ENCODE measurements at regions of chr16 and their contacts with region 1.

Region 1: DNA sequence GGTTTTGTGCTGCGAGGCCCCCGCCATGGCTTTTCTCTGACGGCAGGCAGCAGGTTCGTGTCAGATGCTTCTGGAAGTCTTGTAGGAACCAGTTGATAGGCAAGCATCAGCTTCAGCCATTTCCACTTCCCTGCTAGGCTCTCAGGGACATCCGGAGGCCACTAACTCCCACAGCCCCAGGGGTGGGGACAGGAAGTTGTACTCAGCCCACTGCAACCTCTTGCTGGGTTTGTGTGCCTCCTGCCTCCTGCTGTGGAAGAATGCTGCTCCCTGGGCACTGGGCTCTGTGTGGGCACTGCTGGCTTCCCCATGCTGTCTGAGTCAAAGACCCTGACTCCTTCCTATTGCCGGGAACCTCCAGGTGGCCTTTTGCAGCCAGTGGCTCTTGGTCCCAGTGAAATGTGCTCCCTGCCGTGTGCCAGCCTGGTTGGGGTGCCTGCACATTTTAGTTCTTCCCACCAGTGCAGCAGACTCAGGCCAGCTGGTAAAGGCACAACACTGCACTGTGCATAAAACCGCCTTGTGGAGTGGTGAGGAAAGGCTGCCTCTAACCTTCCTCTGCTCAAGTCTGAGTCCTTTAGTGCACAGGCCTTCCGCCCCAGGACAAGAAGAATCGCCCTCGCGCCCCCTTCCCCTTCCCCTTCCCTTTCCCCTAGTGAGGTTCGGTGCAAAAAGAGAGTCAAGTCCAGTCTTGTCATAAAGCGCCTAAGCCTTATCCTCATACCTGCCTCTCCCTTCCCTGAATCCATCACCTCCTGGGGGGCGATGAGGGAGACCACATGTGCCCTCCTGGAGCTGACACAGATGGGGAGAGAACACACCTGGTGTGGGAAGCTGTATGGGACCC is 16.6 kb downstream of the LDHD start:
- DNase-seq: no peak
- H3K4me3 ChIP-seq: no peak overlapping the region
- H3K27ac ChIP-seq: no peak overlapping the region
- H3K4me1 ChIP-seq: peaks cover 9 to 45% (median 32%) of the 10 kb centered on the region in 4 experiments
- H3K27me3 ChIP-seq: no peaks in the 10 kb centered on the region
- CTCF ChIP-seq: no peak
- EP300 ChIP-seq: no peak
- POLR2A ChIP-seq: no peak
- RAD21 ChIP-seq: no peak

Region 2: DNA sequence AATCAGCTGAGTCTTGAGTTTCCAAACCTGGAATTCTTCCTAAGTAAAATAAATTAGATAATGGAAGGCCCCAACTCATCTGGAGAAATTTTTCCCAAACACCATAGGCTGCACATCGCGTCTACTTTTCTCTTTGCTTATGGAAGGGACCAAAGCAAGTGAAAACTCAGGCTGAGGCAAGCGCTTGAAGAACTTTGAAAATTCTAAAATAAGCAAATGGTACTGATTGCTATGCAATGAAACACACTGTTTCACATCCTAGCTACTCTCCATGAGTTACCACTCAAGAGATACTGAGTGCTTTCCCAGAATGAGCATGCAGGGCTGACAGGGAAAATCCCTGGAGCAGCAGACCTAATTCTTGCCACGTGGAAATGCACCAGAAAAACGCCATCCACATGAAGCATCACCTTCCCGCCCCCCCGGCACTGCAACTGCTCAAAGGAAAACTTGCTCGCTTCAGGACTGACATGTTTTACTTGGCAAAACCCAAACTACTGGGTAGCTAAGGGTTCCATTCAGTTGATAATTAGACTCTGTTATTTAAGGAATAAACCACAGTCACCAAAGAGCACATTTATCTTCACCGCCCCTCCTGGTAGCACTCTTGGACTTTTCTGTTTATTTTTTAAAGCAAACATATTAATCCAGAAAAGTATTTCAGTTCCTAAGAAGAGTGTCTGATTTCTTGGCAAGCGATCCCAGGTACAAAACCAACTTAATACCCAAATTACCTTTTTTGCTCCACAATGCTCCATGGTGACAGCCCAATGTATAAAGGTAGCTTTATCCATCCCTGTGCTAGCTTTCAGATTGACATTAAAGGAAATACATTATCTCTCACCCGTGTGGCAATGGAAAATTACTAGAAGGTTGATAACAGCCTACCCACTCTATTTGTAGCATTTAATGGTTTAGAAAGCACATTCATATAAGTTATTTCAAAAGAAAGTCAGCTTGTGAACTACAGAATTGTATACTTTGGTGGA is 177.5 kb before region 1 on chr16:
- CTCF ChIA-PET with region 1: no interaction called
- POLR2A ChIA-PET with region 1: no interaction called
- DNase-seq: no peak
- H3K4me3 ChIP-seq: no peak overlapping the region
- H3K27ac ChIP-seq: no peak overlapping the region
- H3K4me1 ChIP-seq: no peaks in the 10 kb centered on the region
- H3K27me3 ChIP-seq: no peaks in the 10 kb centered on the region
- CTCF ChIP-seq: no peak
- EP300 ChIP-seq: no peak
- POLR2A ChIP-seq: no peak
- RAD21 ChIP-seq: no peak

Region 3: DNA sequence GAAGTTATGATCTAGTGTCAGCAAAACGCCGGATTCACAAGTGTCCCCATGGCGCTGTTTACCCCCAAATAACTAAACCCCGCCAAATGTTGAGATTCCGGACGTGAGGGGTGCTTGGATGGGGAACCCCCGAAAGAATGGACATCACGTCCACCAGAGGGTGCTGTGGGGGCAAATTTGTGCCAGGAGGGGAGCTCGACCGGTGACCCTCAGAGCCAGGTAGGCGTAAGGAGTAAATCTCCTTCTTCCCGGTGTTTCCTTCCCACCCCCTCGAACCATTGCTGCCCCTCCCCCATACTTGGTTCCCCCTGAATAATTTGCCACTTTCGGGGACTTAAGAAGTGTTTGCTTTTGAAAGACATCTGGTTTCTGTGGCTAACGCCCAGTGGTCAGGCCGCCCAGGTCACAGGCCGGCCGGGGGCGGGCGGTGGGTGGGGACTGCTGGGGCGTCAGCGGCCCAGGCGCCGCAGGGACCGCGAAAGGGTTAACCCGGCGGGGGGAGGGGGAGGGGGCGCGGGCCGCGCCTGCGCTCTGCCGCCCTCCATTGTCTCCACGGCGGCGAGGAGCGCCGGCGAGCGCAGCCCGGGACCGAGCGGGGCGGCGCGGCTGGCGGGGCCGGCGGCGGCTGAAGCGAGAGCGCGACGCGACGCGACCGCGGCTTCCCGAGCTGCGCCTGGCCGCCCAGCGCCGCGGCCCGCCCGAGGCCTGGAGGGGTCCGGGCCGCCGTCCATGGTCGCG is 101.3 kb before region 1 on chr16 and contains the start of gene ZNRF1:
- CTCF ChIA-PET with region 1: interaction called, 24 read pairs
- POLR2A ChIA-PET with region 1: interaction called, 4 read pairs
- DNase-seq: peak; percentile 60 to 94
- H3K4me3 ChIP-seq: peak within 1 kb of the TSS; percentile 56 to 90 (median 70)
- H3K27ac ChIP-seq: peak within 1 kb of the TSS; percentile 67; the same call in 1 of the 2 replicates
- H3K4me1 ChIP-seq: peaks cover 2 to 15% (median 12%) of the 10 kb centered on the region in 4 experiments; a peak in 6 of 7 replicates
- H3K27me3 ChIP-seq: no peaks in the 10 kb centered on the region; a peak in 1 of 7 replicates
- CTCF ChIP-seq: peak; percentile 74 to 87 (median 80)
- EP300 ChIP-seq: no peak
- POLR2A ChIP-seq: peak; percentile 54 to 74
- RAD21 ChIP-seq: peak; percentile 83
- total RNA-seq, gene ZNRF1: 48.0 and 52.9 TPM in 2 replicates

Region 4: DNA sequence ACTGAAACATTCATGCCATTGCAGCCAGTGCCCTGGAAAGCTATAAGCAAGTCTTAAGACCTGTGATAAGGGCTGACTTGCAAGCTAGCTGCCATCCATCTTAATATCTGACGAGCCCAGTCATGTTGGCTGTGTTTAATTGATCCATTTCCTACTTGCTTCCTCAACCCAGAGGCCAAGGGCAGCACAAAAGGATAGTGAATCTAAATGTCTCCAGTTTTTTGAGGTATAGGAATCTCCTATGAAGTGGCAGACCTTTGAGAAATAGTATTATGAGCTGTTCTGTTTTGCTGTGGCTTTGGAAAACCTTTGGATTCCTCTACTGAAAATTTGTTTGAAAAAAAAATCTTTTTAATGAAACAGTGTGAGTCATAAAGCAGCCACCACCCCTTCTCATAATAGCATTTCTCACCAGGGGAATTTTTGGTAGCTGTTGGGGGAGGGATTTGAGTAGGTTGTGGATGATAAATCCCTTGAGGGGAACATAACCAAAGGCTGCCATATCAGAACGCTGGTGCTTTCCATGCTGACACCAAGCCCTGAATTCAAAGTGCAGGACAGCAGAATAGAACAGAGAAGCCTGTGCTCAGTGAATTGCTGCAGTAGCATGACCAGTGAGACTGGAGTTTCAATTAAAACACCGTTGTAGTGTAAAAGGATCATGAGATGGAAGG is 88.2 kb before region 1 on chr16:
- CTCF ChIA-PET with region 1: interaction called, 21 read pairs
- POLR2A ChIA-PET with region 1: no interaction called
- DNase-seq: no peak
- H3K4me3 ChIP-seq: no peak overlapping the region
- H3K27ac ChIP-seq: no peak overlapping the region
- H3K4me1 ChIP-seq: peaks cover 0 to 14% (median 3%) of the 10 kb centered on the region in 4 experiments; a peak in 4 of 7 replicates
- H3K27me3 ChIP-seq: no peaks in the 10 kb centered on the region
- CTCF ChIP-seq: no peak
- EP300 ChIP-seq: no peak
- POLR2A ChIP-seq: no peak
- RAD21 ChIP-seq: no peak

Region 5: GRCh38 chr16:75074920-75075687 is 24.9 kb before region 1 on chr16:
- CTCF ChIA-PET with region 1: interaction called, 10 read pairs
- POLR2A ChIA-PET with region 1: no interaction called
- DNase-seq: no peak
- H3K4me3 ChIP-seq: no peak overlapping the region
- H3K27ac ChIP-seq: no peak overlapping the region
- H3K4me1 ChIP-seq: peaks cover 5 to 17% (median 14%) of the 10 kb centered on the region in 4 experiments
- H3K27me3 ChIP-seq: no peaks in the 10 kb centered on the region
- CTCF ChIP-seq: no peak
- EP300 ChIP-seq: no peak
- POLR2A ChIP-seq: no peak
- RAD21 ChIP-seq: no peak

Region 6: DNA sequence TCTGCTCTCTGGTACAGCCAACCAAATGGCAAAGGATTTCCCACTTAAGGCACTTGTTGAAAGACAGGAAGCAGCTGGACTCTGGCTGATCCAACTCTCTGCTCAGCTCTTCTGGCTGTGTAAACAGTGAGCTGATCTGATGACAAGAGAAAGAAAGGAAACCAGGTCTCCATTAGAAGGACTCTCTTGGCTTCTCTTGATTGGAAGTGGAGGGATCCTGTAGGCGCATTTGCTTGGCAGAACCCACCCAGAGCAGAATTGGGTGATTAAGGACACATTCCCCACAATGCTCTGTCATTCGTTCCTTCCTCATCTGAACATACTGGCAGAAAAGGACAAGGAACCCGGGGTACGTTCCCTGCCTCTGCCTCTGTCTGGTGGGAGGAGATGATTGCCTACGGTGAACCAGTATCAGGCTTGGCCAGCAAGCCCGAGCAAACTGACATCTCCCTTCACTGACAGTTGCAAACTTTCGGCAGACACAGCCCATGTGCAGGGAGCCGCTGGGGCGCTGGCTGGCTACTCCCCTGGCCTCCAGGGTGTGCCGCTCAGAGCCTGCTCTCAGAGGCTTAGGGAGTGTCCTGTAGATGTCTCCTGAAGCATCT is 12.5 kb before region 1 on chr16:
- CTCF ChIA-PET with region 1: interaction called, 16 read pairs
- POLR2A ChIA-PET with region 1: interaction called, 6 read pairs
- DNase-seq: no peak
- H3K4me3 ChIP-seq: no peak overlapping the region
- H3K27ac ChIP-seq: no peak overlapping the region
- H3K4me1 ChIP-seq: peaks cover 0 to 17% (median 8%) of the 10 kb centered on the region in 4 experiments; a peak in 4 of 7 replicates
- H3K27me3 ChIP-seq: no peaks in the 10 kb centered on the region
- CTCF ChIP-seq: no peak
- EP300 ChIP-seq: no peak
- POLR2A ChIP-seq: no peak
- RAD21 ChIP-seq: peak in 1 of 2 experiments; percentile 21; a peak in 1 of 4 replicates